Endothelial cell of umbilical vein (primary cell): ENCODE measurements at regions of chr21 and their contacts with region 1.

Region 1: DNA sequence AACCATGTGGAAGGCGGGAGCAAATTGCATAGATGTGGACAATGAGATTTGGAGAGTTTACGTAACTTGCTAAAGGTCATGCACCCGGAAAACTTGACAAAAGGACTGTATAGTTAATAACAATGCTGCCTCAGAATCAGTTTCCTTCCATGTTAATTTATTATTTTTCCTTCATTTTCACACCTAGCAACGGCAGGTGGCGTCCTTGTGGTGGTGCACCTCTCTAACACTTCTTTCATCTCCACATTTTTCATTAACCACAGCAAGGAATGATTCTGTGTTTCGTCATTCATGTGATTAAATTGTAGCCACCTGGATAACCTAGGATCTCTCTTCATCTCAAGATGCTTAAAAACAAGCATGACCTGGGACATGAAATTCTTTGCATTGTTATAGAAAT is 2133.0 kb downstream of the NCAM2 start:
- DNase-seq: peak; percentile 28
- H3K4me3 ChIP-seq: no peak overlapping the region
- H3K27ac ChIP-seq: no peak overlapping the region
- H3K4me1 ChIP-seq: no peaks in the 10 kb centered on the region
- H3K27me3 ChIP-seq: no peaks in the 10 kb centered on the region
- CTCF ChIP-seq: peak in 1 of 2 donors; percentile 10
- POLR2A ChIP-seq: no peak

Region 2: DNA sequence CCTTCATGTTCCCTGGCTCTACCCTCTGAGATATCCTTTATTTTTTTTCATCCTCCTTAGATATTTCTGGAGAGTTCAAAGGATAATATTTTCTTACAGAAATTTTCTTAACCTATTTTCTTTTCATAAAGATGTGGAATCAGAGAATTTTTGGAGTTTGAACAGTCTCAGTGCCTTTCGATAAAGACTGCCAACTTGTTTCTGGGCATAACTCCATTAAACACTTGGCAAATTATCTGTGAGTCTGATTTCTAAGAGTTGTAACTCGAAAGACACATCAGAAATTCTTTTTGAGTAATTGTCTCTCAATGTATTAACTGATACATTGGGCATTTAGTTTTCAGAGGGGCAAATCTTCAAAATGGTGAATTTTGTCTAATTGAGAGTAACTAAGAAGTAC is 877.4 kb before region 1 on chr21:
- CTCF ChIA-PET with region 1: no interaction called
- POLR2A ChIA-PET with region 1: no interaction called
- dilution Hi-C with region 1: no loop called
- intact Hi-C with region 1: no loop called
- DNase-seq: no peak
- H3K4me3 ChIP-seq: no peak overlapping the region
- H3K27ac ChIP-seq: no peak overlapping the region
- H3K4me1 ChIP-seq: no peaks in the 10 kb centered on the region
- H3K27me3 ChIP-seq: no peaks in the 10 kb centered on the region
- CTCF ChIP-seq: no peak
- POLR2A ChIP-seq: no peak

Region 3: DNA sequence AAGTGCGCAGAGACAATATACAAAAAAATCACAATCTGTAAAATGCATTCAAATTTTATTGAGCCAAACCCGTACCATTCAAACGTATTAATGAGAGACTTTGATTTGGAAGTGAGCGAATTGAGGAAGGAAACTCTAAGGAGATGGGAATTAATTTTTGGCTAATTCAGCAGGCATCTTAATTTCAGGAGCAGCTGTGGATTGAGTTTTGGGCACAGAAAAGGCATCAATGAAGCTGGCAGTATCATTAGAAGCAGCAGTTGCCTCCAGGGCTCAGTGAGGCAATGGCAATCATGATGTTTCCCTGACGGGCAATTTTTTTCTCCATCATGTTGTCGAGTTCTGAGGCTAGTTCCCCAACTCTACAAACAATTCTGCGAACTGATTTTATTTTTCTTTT is 91.3 kb before region 1 on chr21:
- CTCF ChIA-PET with region 1: no interaction called
- POLR2A ChIA-PET with region 1: no interaction called
- dilution Hi-C with region 1: no loop called
- intact Hi-C with region 1: no loop called
- DNase-seq: no peak
- H3K4me3 ChIP-seq: no peak overlapping the region
- H3K27ac ChIP-seq: no peak overlapping the region
- H3K4me1 ChIP-seq: no peaks in the 10 kb centered on the region
- H3K27me3 ChIP-seq: no peaks in the 10 kb centered on the region
- CTCF ChIP-seq: no peak
- POLR2A ChIP-seq: no peak

Region 4: GRCh38 chr21:23394458-23394857 is 263.3 kb after region 1 on chr21:
- CTCF ChIA-PET with region 1: no interaction called
- POLR2A ChIA-PET with region 1: no interaction called
- dilution Hi-C with region 1: no loop called
- intact Hi-C with region 1: loop called (anchors 5 kb)
- DNase-seq: peak; percentile 6
- H3K4me3 ChIP-seq: no peak overlapping the region
- H3K27ac ChIP-seq: no peak overlapping the region
- H3K4me1 ChIP-seq: no peaks in the 10 kb centered on the region
- H3K27me3 ChIP-seq: no peaks in the 10 kb centered on the region
- CTCF ChIP-seq: no peak
- POLR2A ChIP-seq: no peak